ENCODE measurements at regions of chr2 and their contacts with region 1.

Region 1: GRCh38 chr2:241386519-241386918 is 30.4 kb downstream of the FARP2 start:
- DNase-seq: no peak
- ATAC-seq: no peak
- H3K4me3 ChIP-seq: no peak overlapping the region
- H3K27ac ChIP-seq: no peak overlapping the region
- H3K4me1 ChIP-seq: peaks cover 18% of the 10 kb centered on the region
- H3K27me3 ChIP-seq: no peaks in the 10 kb centered on the region
- CTCF ChIP-seq: no peak
- EP300 ChIP-seq: no peak
- POLR2A ChIP-seq: no peak
- RAD21 ChIP-seq: no peak

Region 2: GRCh38 chr2:241148891-241149674 is 237.4 kb before region 1 on chr2 and contains the start of gene PASK:
- CTCF ChIA-PET with region 1: no interaction called
- POLR2A ChIA-PET with region 1: no interaction called
- RAD21 ChIA-PET with region 1: no interaction called
- SMC1A ChIA-PET with region 1: no interaction called
- in situ Hi-C with region 1: no loop called
- intact Hi-C with region 1: no loop called
- DNase-seq: peak; percentile 79
- ATAC-seq: peak; percentile 91
- H3K4me3 ChIP-seq: peak within 1 kb of the TSS; percentile 74
- H3K27ac ChIP-seq: peak within 1 kb of the TSS; percentile 48
- H3K4me1 ChIP-seq: peaks cover 23% of the 10 kb centered on the region
- H3K27me3 ChIP-seq: no peaks in the 10 kb centered on the region
- CTCF ChIP-seq: no peak
- EP300 ChIP-seq: no peak
- POLR2A ChIP-seq: peak; percentile 67
- RAD21 ChIP-seq: no peak
- polyA plus RNA-seq, gene PASK: 9.6 to 10.8 TPM

Region 3: GRCh38 chr2:241372361-241372992 is 14.0 kb before region 1 on chr2:
- CTCF ChIA-PET with region 1: interaction called, 55 read pairs
- POLR2A ChIA-PET with region 1: interaction called, 11 read pairs
- RAD21 ChIA-PET with region 1: interaction called, 35 read pairs
- SMC1A ChIA-PET with region 1: interaction called, 176 read pairs
- in situ Hi-C with region 1: no loop called
- intact Hi-C with region 1: no loop called
- DNase-seq: no peak
- ATAC-seq: no peak
- H3K4me3 ChIP-seq: no peak overlapping the region
- H3K27ac ChIP-seq: no peak overlapping the region; the same call in 1 of the 2 replicates
- H3K4me1 ChIP-seq: peaks cover 43% of the 10 kb centered on the region
- H3K27me3 ChIP-seq: no peaks in the 10 kb centered on the region
- CTCF ChIP-seq: no peak
- EP300 ChIP-seq: no peak
- POLR2A ChIP-seq: no peak
- RAD21 ChIP-seq: no peak